ENCODE measurements at regions of chr2 and their contacts with region 1.

Region 1: DNA sequence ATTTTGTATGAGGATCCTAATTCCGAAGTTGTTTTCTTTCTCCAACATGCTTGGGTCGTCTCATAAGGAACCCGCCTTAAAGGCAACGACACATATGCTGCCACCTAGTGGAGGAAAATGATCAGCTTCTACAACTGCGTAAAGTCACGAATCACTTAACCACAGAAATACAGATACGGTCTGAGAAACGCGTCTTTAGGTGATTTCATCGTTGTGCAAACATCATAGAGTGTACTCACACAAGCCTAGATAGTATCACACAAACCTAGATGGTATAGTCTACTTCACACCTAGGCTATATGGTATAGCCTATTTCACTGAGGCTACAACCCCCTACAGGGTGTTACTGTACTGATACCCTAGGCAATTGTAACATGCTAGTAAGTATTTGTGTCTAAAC is 13.1 kb downstream of the GNLY start:
- DNase-seq: peak; percentile 94
- H3K4me3 Mint-ChIP-seq: no peak overlapping the region
- H3K27ac Mint-ChIP-seq: peak overlapping the region; percentile 61
- H3K4me1 Mint-ChIP-seq: peaks cover 56% of the 10 kb centered on the region
- H3K27me3 Mint-ChIP-seq: peaks cover 5% of the 10 kb centered on the region

Region 2: GRCh38 chr2:85642725-85643124 is 64.6 kb before region 1 on chr2:
- intact Hi-C with region 1: loop called (anchors 1 kb)
- DNase-seq: no peak
- H3K4me3 Mint-ChIP-seq: no peak overlapping the region
- H3K27ac Mint-ChIP-seq: peak overlapping the region; percentile 16
- H3K4me1 Mint-ChIP-seq: peaks cover 12% of the 10 kb centered on the region
- H3K27me3 Mint-ChIP-seq: no peaks in the 10 kb centered on the region

Region 3: GRCh38 chr2:85678794-85679672 is 28.3 kb before region 1 on chr2:
- intact Hi-C with region 1: loop called (anchors 1 kb)
- DNase-seq: peak; percentile 95
- H3K4me3 Mint-ChIP-seq: peak overlapping the region; percentile 18
- H3K27ac Mint-ChIP-seq: no peak overlapping the region
- H3K4me1 Mint-ChIP-seq: peaks cover 24% of the 10 kb centered on the region
- H3K27me3 Mint-ChIP-seq: no peaks in the 10 kb centered on the region

Region 4: DNA sequence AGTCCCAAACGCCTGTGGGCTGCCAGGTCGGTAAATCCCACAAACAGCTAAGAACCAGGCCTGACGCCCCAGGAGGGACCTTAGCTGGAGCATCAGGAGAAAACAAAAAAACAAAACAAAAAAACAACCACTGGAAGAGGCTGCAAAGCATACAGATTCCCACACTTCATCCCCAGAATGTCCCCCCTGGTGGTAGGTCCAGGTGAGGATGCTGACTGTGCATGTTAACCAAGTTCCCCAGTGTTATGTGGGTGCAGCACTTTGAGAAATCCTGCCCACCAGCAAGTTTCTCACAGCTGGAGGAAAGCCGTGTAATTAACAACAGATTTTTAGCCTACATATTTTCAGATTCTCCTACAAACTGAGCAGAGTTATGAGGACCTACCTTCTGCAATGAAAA is 166.4 kb after region 1 on chr2:
- intact Hi-C with region 1: no loop called
- DNase-seq: no peak
- H3K4me3 Mint-ChIP-seq: no peak overlapping the region
- H3K27ac Mint-ChIP-seq: no peak overlapping the region
- H3K4me1 Mint-ChIP-seq: peaks cover 30% of the 10 kb centered on the region
- H3K27me3 Mint-ChIP-seq: no peaks in the 10 kb centered on the region